ENCODE measurements at regions of chr2 and their contacts with region 1.

Region 1: DNA sequence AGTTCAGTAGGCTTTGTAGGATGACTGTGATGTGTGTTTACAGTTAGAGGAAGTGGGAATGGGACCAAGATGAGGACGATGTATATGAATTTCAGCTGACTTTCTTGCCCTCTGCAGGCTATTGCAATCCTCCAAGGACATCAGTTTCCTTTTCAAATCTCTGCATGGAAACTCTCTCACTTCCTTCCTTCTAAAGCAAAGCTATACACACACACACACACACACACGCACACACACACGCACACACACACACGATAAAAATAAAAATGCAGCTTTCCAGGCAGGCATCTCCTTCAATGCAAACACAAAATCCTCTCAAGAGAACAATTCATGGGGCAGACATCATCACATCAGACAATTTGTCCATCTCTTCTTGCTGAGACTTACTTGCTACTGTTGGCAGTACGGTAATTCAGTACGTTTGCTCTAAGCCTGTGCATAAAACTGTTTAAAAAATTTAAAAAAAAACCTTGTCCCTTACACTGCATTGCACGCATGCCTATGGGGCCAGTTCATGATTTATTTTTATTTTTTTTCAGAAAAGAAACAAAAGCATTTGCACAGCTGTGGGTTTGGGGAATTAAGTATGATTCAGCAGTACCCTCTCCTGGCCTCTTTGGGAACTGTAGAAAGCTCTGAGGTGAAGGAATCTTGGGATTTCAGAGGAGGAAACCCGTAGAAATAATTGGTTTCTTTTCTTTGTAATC is 27.1 kb upstream of the ICOS start:
- DNase-seq: no peak
- H3K4me3 Mint-ChIP-seq: peak overlapping the region; percentile 41
- H3K27ac Mint-ChIP-seq: peak overlapping the region; percentile 62
- H3K4me1 Mint-ChIP-seq: peaks cover 25% of the 10 kb centered on the region
- H3K27me3 Mint-ChIP-seq: peaks cover 2% of the 10 kb centered on the region

Region 2: DNA sequence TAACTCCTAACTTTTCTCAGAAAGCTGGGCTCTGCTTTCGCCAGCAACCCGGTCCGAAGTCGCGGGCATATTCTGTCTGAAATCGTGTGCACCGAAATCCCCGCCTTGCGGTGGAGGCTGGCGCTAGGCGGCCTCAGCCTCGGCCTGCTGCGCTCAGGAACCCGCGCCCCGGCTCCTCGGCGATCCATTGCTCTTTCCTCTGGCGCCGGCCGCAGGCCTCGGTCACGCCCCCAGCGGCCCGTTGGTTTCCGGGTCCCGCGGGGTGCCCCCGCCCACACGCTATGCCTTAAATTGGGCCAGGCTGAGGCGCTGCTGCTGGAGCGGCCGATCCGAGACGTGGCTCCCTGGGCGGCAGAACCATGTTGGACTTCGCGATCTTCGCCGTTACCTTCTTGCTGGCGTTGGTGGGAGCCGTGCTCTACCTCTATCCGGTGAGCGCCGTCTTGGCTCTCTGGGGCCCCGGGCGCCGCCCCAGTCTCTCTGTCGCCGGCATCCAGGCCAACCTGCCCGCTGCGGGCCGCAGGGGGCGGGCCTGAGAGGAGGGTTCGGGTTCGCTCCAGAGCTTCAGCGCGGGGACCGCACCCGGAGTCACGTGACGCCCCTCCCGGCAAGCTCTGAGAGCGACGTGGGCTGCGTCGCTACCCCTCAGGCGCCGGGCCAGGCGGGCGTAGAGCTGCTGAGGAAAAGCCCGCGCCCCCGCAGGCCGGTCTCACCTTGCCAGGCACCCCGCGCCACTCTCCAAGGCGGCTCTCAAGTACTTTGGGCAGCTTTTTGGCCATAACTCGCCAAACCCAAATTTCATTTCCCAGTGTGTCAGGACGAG is 670.5 kb before region 1 on chr2 and contains the start of gene CYP20A1:
- intact Hi-C with region 1: loop called (anchors 10 kb)
- DNase-seq: peak; percentile 97
- H3K4me3 Mint-ChIP-seq: peak within 1 kb of the TSS; percentile 94
- H3K27ac Mint-ChIP-seq: peak within 1 kb of the TSS; percentile 98
- H3K4me1 Mint-ChIP-seq: peaks cover 26% of the 10 kb centered on the region
- H3K27me3 Mint-ChIP-seq: no peaks in the 10 kb centered on the region
- total RNA-seq, gene CYP20A1: 23.1 and 26.0 TPM in 2 replicates

Region 3: DNA sequence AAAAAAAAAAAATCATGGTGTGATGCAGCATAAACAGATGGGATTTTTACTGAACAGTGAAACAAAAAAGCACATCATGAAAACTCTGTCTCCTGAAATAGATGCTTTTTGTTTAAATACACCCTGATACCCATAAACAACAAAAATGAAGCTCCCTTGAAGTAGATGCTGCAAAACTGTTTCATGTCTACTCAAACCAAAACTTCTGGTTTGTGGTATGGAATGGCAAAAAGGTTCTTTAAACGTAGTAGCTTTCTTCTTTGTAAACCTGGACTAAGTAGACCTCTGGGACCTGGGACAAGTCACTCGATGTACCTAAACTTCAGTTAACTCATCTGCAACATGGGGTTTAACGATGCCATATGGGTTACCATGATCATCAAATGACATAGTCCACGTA is 309.9 kb before region 1 on chr2:
- intact Hi-C with region 1: loop called (anchors 5 kb)
- DNase-seq: no peak
- H3K4me3 Mint-ChIP-seq: peak overlapping the region; percentile 37
- H3K27ac Mint-ChIP-seq: no peak overlapping the region
- H3K4me1 Mint-ChIP-seq: peaks cover 39% of the 10 kb centered on the region
- H3K27me3 Mint-ChIP-seq: peaks cover 59% of the 10 kb centered on the region

Region 4: GRCh38 chr2:203763938-203764664 is 145.3 kb before region 1 on chr2:
- intact Hi-C with region 1: loop called (anchors 1 kb)
- DNase-seq: peak; percentile 20
- H3K4me3 Mint-ChIP-seq: peak overlapping the region; percentile 22
- H3K27ac Mint-ChIP-seq: peak overlapping the region; percentile 95
- H3K4me1 Mint-ChIP-seq: peaks cover 66% of the 10 kb centered on the region
- H3K27me3 Mint-ChIP-seq: no peaks in the 10 kb centered on the region

Region 5: DNA sequence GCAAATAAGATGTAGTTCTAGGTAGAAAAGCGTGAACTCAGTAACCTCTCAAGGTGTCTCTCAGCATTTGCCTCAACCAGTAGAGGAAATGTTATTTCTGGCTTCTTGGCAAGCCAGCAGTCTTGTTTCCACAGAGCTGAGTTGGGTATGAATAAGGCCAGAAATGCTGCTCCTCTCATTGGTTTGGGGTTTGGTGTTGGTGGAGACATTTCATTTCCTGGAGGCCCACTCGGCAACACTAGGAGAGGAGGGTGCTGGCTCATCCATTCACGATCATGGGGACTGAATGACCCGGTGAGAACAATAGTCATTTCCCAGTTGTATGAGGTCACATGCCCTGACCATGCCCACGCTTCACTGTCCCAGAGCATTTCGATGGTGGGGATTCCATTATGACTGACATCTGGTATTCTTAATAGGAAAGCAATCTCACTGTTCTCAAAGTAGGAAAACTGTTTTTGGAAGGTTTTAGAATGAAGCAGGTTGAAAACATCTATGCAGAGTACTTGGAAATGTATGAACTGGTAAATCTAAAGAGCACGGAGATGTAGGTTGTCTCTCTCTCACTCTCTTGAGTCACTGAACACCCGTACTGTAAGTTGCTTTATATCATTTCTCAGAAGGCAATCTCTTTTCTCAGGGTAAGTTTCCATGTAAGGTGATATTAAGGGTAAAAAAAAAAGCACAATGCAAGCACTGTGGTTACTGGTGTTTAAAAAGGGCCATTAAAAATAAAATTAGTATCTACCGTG is 78.9 kb before region 1 on chr2:
- intact Hi-C with region 1: loop called (anchors 1 kb)
- DNase-seq: peak; percentile 32
- H3K4me3 Mint-ChIP-seq: peak overlapping the region; percentile 27
- H3K27ac Mint-ChIP-seq: peak overlapping the region; percentile 87
- H3K4me1 Mint-ChIP-seq: peaks cover 31% of the 10 kb centered on the region
- H3K27me3 Mint-ChIP-seq: no peaks in the 10 kb centered on the region

Region 6: GRCh38 chr2:203893401-203893800 is 16.0 kb before region 1 on chr2:
- intact Hi-C with region 1: loop called (anchors 1 kb)
- DNase-seq: no peak
- H3K4me3 Mint-ChIP-seq: no peak overlapping the region
- H3K27ac Mint-ChIP-seq: peak overlapping the region; percentile 89
- H3K4me1 Mint-ChIP-seq: peaks cover 73% of the 10 kb centered on the region
- H3K27me3 Mint-ChIP-seq: no peaks in the 10 kb centered on the region

Region 7: GRCh38 chr2:205660521-205661124 is 1751.2 kb after region 1 on chr2:
- intact Hi-C with region 1: no loop called
- DNase-seq: peak; percentile 30
- H3K4me3 Mint-ChIP-seq: peak overlapping the region; percentile 28
- H3K27ac Mint-ChIP-seq: peak overlapping the region; percentile 45
- H3K4me1 Mint-ChIP-seq: peaks cover 32% of the 10 kb centered on the region
- H3K27me3 Mint-ChIP-seq: peaks cover 5% of the 10 kb centered on the region

Measured in activated T-helper 1 cell treated with anti-CD3 and anti-CD28 coated beads, Interleukin-12 subunit alpha, Interleukin-12 subunit beta, Interleukin-2, Interleukin-4 antibody, amounts not matched to agents 30 ng/mL and 10 ng/mL and 1 ng/mL, durations not matched to agents 14 hours and 24 hours and 36 hours (primary cell).